ENCODE measurements at regions of chr5 and their contacts with region 1.

Region 1: GRCh38 chr5:146541958-146542849 is 26.2 kb upstream of the GPR151 start:
- DNase-seq: no peak
- H3K4me3 ChIP-seq: no peak overlapping the region
- H3K27ac ChIP-seq: no peak overlapping the region
- H3K4me1 ChIP-seq: no peaks in the 10 kb centered on the region
- H3K27me3 ChIP-seq: no peaks in the 10 kb centered on the region
- CTCF ChIP-seq: peak; percentile 61 to 83 (median 68)
- EP300 ChIP-seq: no peak
- POLR2A ChIP-seq: no peak

Region 2: DNA sequence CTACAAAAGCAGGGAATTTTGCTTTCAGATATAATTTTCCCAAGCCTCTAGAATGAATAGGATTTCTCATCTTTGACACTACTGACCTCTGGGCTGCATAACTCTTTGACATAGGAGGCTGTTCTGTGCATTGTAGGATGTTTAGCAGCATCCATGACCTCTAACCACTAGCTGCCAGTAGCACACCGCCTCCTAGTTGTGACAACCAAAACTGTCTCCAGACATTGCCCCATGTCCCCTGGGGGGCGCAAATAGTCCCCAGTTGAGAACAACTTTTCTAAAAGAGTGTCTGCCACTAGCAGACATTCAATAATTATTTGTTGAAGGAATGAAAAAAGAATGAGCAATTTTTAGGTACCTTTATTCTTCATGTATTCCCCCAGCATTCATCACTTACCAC is 151.7 kb before region 1 on chr5:
- intact Hi-C with region 1: no loop called
- DNase-seq: no peak
- H3K4me3 ChIP-seq: no peak overlapping the region
- H3K27ac ChIP-seq: no peak overlapping the region
- H3K4me1 ChIP-seq: no peaks in the 10 kb centered on the region
- H3K27me3 ChIP-seq: no peaks in the 10 kb centered on the region
- CTCF ChIP-seq: no peak
- EP300 ChIP-seq: no peak
- POLR2A ChIP-seq: no peak

Region 3: GRCh38 chr5:146965761-146966659 is 423.8 kb after region 1 on chr5:
- intact Hi-C with region 1: loop called (anchors 5 kb)
- DNase-seq: no peak
- H3K4me3 ChIP-seq: no peak overlapping the region
- H3K27ac ChIP-seq: no peak overlapping the region
- H3K4me1 ChIP-seq: peaks cover 0 to 7% (median 2%) of the 10 kb centered on the region in 4 donors
- H3K27me3 ChIP-seq: no peaks in the 10 kb centered on the region
- CTCF ChIP-seq: peak; percentile 77 to 89 (median 88)
- EP300 ChIP-seq: no peak
- POLR2A ChIP-seq: no peak

Region 4: DNA sequence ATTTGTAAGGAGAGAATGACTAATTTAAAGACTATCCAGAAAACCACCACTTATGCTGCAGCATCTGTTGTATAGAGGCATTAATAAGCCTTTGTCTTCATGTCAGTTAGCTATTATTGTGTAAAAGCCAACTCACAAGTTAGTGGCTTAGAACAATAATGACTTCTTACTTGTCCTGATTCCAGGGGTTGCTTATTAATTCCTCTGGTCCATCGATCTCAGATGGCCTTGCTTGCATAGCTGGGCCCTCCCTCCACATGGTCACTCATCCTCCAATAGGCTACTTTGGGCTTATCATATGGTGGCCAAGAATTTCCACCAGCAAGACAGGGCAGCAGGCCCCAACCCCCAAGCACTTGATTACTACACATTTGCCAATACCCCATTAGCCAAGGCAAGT is 648.1 kb after region 1 on chr5:
- intact Hi-C with region 1: loop called (anchors 5 kb)
- DNase-seq: no peak
- H3K4me3 ChIP-seq: no peak overlapping the region
- H3K27ac ChIP-seq: no peak overlapping the region
- H3K4me1 ChIP-seq: peaks cover 0 to 10% (median 2%) of the 10 kb centered on the region in 4 donors
- H3K27me3 ChIP-seq: no peaks in the 10 kb centered on the region
- CTCF ChIP-seq: no peak
- EP300 ChIP-seq: no peak
- POLR2A ChIP-seq: no peak

Measured in esophagus muscularis mucosa (tissue), 4 donors.